Right cardiac atrium (tissue), 5 donors: ENCODE measurements at regions of chr1 and their contacts with region 1.

Region 1: GRCh38 chr1:34597877-34598514 is 156.9 kb upstream of the GJB5 start:
- DNase-seq: peak; percentile 48 to 80 (median 72)
- ATAC-seq: peak; percentile 50 to 64
- H3K4me3 ChIP-seq: no peak overlapping the region
- H3K27ac ChIP-seq: no peak overlapping the region
- H3K4me1 ChIP-seq: no peaks in the 10 kb centered on the region
- H3K27me3 ChIP-seq: no peaks in the 10 kb centered on the region

Region 2: DNA sequence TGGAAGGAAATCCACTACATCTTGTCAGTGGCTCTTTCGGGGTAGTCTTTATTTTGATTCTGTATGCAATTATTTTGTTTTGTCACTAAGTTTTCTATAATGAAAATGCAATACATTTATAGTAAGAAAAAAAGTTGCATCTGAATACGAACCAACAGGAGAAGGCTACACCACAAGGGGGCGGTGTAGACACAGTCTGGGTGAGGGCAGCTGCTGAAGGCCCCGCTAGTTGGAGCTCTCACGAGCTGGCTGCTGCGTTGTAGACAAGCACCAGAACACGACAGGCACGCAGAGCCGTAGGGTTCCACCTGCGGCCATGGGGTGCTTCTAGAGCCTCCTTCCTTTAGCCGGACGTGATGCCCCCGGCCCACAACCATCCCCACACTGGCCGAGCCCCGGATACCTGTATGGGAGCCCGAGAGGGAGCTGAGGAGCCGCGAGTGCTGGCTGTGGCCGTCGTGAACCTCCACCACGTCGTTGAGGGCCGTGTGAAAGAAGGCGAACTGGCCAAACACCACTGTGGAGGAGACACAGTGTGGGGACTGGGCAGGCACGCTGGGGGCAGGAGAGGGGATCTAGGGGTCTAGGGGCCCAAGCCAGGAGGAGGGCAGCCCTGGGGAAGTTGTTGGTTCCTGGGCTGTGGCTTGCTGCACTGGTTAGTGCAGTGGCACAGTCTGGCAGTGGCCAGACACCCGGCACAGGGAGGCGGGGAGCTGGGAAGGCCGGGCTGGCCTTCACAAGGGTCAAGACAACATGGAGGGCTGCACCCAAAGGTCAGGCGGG is 964.8 kb before region 1 on chr1:
- intact Hi-C with region 1: loop called in 1 of 4 experiments (anchors 5 kb)
- DNase-seq: peak; percentile 91 to 96 (median 93)
- ATAC-seq: peak; percentile 83 to 85
- H3K4me3 ChIP-seq: no peak overlapping the region
- H3K27ac ChIP-seq: no peak overlapping the region
- H3K4me1 ChIP-seq: no peaks in the 10 kb centered on the region
- H3K27me3 ChIP-seq: no peaks in the 10 kb centered on the region

Region 3: GRCh38 chr1:34736692-34737091 is 138.7 kb after region 1 on chr1:
- intact Hi-C with region 1: no loop called
- DNase-seq: no peak
- ATAC-seq: no peak
- H3K4me3 ChIP-seq: no peak overlapping the region
- H3K27ac ChIP-seq: no peak overlapping the region
- H3K4me1 ChIP-seq: no peaks in the 10 kb centered on the region
- H3K27me3 ChIP-seq: no peaks in the 10 kb centered on the region

Region 4: DNA sequence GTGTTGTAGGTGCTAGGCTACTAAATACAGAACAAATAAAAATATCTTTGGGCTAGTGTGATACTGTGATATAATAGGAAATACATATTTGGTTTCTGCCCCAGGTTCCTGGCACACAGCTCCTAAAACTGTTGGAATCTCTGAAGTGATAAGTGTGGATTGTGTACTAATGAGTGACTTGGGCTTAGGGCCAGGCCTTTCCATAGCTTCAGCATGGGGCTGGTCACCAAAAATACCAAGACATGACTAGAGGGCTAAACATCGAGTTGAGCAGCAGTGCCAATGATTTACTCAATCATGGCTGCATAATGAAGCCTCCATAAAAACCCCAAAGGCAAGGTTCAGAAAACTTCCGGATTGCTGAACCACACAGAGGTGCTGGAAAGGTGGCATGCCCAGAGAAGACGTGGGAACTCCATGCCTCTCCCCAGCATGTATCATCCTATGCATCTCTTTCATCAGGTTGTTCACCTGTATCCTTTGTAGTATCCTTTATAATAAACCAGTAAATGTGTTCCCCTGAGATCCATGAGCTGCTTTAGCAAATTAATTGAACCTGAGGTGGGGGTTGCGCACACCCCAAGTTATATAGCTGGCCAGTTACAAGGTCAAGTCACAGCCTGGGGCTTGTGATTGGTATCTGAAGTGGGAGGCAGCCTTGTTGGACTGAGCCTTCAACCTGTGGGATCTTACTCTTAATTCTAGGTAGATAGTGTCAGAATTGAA is 722.2 kb after region 1 on chr1:
- intact Hi-C with region 1: no loop called
- DNase-seq: peak in 2 of 3 donors; percentile 33 to 56
- ATAC-seq: peak; percentile 80 to 90
- H3K4me3 ChIP-seq: no peak overlapping the region
- H3K27ac ChIP-seq: peak overlapping the region; percentile 90
- H3K4me1 ChIP-seq: peaks cover 6% of the 10 kb centered on the region
- H3K27me3 ChIP-seq: no peaks in the 10 kb centered on the region